Mammary epithelial cell (primary cell): ENCODE measurements at regions of chr7 and their contacts with region 1.

Region 1: DNA sequence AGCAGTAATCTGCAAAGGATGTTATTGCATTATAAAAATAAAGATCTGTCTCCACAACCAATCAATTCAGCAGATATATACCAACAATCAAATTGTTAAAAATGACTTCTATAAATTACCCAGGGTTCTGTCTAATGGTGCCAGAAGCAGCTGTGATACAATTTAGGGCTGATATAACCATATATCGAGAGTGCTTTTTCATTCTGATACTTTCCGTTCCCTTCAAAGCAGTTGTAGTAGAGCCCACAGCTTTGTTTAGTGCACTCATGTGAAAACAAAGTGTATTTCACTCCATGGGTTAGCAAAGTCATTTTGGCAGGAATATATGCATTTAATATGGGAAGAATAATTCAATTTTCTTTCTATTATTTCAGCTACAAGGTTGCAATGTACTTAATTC is 83.1 kb upstream of the CHCHD3 start:
- DNase-seq: no peak
- H3K4me3 ChIP-seq: no peak overlapping the region
- H3K27ac ChIP-seq: no peak overlapping the region
- H3K4me1 ChIP-seq: no peaks in the 10 kb centered on the region
- H3K27me3 ChIP-seq: no peaks in the 10 kb centered on the region
- CTCF ChIP-seq: no peak

Region 2: DNA sequence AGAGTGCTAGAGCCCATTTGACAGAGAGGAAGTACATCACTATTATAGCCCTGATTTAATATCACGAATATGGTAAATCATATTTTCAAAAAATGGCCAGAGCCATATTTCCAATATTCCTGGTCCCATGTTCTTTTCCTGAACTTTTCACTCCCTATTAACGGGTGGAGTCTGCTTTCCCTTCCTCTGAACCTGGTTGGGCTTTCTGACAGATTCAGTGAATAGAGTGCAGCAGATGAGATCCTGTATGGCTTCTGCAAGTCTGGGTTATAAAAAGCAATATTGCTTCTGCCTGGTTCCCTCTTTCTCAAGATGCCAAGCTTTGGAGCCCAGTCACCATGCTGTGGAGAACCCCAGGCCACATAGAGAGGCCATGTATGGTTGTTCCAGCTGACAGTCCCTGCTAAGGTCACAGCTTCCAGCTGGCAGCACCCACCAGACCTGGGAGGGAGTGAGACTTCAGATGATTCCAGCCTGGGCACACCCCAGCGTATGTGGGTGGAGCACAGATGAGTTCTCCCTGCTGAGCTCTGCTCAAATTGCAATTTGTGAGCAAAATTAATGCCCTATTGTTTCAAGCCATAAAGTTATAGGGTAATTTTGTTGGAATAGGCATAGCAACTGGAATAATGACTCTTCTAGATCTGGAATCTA is 65.2 kb before region 1 on chr7:
- CTCF ChIA-PET with region 1: no interaction called
- dilution Hi-C with region 1: loop called (anchors 5 kb)
- in situ Hi-C with region 1: no loop called
- intact Hi-C with region 1: no loop called
- DNase-seq: no peak
- H3K4me3 ChIP-seq: no peak overlapping the region
- H3K27ac ChIP-seq: no peak overlapping the region
- H3K4me1 ChIP-seq: no peaks in the 10 kb centered on the region
- H3K27me3 ChIP-seq: peaks cover 5% of the 10 kb centered on the region
- CTCF ChIP-seq: no peak

Region 3: DNA sequence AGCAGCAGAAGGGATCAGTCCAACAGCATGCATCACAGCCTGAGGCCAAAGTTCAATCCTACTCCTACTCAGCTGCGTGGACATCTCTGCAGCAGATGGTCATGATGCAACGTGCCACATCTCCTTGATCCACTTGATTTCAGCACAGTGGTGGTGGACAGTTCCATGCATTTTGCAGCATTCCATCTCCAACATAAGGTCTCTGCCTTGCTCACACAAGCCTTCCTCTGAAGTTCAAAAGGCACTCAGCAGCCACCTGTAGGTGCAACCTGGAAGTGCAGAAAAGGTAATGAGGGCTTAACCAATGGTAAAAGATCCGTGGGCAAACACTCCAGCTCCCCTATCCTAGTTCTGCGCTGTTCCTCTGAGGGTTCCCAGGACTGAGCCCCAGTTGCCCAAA is 25.7 kb before region 1 on chr7:
- CTCF ChIA-PET with region 1: no interaction called
- dilution Hi-C with region 1: loop called (anchors 5 kb)
- in situ Hi-C with region 1: no loop called
- intact Hi-C with region 1: no loop called
- DNase-seq: peak; percentile 25
- H3K4me3 ChIP-seq: no peak overlapping the region
- H3K27ac ChIP-seq: no peak overlapping the region
- H3K4me1 ChIP-seq: no peaks in the 10 kb centered on the region
- H3K27me3 ChIP-seq: peaks cover 2% of the 10 kb centered on the region
- CTCF ChIP-seq: peak; percentile 18 to 41

Region 4: GRCh38 chr7:133196856-133197612 is 32.0 kb after region 1 on chr7:
- CTCF ChIA-PET with region 1: no interaction called
- dilution Hi-C with region 1: no loop called
- in situ Hi-C with region 1: no loop called
- intact Hi-C with region 1: no loop called
- DNase-seq: no peak
- H3K4me3 ChIP-seq: no peak overlapping the region
- H3K27ac ChIP-seq: no peak overlapping the region
- H3K4me1 ChIP-seq: no peaks in the 10 kb centered on the region
- H3K27me3 ChIP-seq: no peaks in the 10 kb centered on the region
- CTCF ChIP-seq: no peak

Region 5: DNA sequence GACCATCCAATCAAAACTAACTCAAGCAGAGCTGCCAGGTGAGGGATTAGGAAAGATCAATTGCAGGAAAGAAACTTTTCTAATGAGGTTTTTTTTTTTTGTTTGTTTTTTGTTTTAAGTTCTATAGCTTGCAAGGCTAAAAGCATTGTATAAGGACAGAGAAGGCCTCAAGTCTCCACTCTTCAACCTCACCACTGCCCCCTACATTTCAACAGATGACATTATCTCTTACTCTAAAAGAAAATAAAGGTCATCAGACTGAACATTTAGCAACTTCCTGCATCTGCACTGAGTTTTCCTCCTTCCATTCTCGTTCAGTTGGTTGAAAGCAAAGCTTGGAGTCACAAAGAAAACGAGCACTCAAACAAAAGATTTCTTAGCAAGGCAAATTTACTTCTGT is 42.7 kb after region 1 on chr7:
- CTCF ChIA-PET with region 1: no interaction called
- dilution Hi-C with region 1: no loop called
- in situ Hi-C with region 1: no loop called
- intact Hi-C with region 1: no loop called
- DNase-seq: no peak
- H3K4me3 ChIP-seq: no peak overlapping the region
- H3K27ac ChIP-seq: no peak overlapping the region
- H3K4me1 ChIP-seq: no peaks in the 10 kb centered on the region
- H3K27me3 ChIP-seq: no peaks in the 10 kb centered on the region
- CTCF ChIP-seq: peak; percentile 17 to 22